Dorsolateral prefrontal cortex (tissue), 120 donors: ENCODE measurements at regions of chr16 and their contacts with region 1.

Region 1: GRCh38 chr16:51524555-51525373 is 373.7 kb upstream of the SALL1 start:
- DNase-seq: peak in 6 of 10 donors; percentile 24 to 49 (median 38)
- H3K4me3 ChIP-seq: no peak overlapping the region
- H3K27ac ChIP-seq: peak overlapping the region in 37 of 59 donors; percentile 1 to 65 (median 46)
- H3K27me3 ChIP-seq: no peaks in the 10 kb centered on the region
- CTCF ChIP-seq: peak in 44 of 56 donors; percentile 11 to 61 (median 36)

Region 2: DNA sequence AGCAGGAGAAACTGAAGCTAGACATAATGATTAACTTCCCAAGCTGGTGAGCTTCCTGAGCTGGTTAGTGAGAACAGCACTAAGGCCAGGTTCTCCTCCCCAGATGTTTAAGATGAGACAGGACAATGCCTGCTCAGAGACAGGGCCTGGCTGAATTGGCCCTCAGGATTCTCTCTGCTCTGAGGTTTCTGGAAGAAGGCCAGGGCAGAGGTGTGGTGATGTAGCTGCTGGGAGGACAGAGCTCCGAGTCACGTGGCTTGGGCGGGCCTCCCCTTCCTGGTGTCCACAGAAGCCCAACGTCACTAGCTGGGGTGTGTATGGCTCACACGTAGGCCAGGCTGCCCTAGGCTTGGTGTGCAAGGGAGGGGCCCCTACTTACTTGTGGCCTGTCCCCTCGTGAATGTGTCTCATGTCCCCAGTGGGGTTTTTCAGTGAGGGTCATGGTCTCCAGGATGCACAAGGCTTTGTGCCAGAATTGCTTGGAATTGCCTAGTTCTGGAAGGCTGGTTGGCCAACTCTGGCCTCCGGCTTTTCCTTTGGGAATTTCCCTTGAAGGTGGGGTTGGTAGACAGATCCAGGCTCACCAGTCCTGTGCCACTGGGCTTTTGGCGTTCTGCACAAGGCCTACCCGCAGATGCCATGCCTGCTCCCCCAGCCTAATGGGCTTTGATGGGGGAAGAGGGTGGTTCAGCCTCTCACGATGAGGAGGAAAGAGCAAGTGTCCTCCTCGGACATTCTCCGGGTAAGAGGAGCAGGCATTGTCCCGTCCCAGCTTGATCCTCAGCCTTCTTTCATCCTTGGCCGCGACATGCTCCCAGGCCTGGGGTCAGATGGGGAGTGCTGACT is 828.0 kb before region 1 on chr16:
- intact Hi-C with region 1: no loop called
- DNase-seq: no peak
- H3K4me3 ChIP-seq: no peak overlapping the region
- H3K27ac ChIP-seq: peak overlapping the region in 24 of 59 donors; percentile 7 to 82 (median 48)
- H3K27me3 ChIP-seq: peaks cover 0 to 31% (median 6%) of the 10 kb centered on the region in 45 donors
- CTCF ChIP-seq: no peak

Region 3: DNA sequence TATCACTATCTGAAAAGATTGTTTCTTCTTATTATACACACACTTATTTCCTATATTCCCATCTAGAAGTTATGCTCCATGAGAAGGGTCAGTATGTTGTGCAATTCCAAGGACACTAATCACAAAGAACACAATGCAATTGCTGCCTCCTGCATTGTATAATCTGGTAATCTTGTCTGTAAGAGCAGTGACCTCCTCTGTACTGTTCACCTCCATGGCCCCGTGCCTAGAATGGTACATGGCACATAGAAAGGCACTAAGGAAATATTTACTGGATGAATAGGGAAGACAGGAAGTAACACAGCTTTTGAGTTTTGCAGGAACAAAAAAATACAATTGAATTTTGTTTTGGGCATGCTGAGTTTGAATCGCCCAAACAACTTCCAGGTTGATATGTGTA is 159.0 kb before region 1 on chr16:
- intact Hi-C with region 1: loop called in 1 of 2 experiments (anchors 10 kb)
- DNase-seq: no peak
- H3K4me3 ChIP-seq: no peak overlapping the region
- H3K27ac ChIP-seq: no peak overlapping the region
- H3K27me3 ChIP-seq: peaks cover 0 to 5% (median 0%) of the 10 kb centered on the region in 45 donors
- CTCF ChIP-seq: no peak

Region 4: DNA sequence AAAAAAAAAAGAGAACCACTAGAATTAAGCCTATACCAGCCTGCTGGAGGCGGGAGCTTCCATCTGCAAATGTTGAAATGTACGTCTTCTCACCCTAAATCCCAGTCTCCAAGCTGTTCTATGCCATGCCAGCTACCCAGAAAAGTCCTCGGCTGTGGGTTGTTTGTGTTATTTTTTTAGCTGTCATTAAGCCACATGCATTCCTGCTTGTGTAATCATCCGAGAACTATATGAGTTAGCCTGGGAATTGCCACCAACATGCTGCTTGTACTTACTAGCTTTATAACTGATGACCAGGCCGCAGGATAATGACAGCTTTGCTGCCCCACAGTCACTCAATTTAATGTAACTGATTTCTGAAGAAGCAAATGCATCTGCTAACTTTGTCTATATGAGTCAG is 59.8 kb before region 1 on chr16:
- intact Hi-C with region 1: no loop called
- DNase-seq: no peak
- H3K4me3 ChIP-seq: no peak overlapping the region
- H3K27ac ChIP-seq: no peak overlapping the region
- H3K27me3 ChIP-seq: no peaks in the 10 kb centered on the region
- CTCF ChIP-seq: no peak